MCF 10A (cell line): ENCODE measurements at regions of chr10 and their contacts with region 1.

Region 1: DNA sequence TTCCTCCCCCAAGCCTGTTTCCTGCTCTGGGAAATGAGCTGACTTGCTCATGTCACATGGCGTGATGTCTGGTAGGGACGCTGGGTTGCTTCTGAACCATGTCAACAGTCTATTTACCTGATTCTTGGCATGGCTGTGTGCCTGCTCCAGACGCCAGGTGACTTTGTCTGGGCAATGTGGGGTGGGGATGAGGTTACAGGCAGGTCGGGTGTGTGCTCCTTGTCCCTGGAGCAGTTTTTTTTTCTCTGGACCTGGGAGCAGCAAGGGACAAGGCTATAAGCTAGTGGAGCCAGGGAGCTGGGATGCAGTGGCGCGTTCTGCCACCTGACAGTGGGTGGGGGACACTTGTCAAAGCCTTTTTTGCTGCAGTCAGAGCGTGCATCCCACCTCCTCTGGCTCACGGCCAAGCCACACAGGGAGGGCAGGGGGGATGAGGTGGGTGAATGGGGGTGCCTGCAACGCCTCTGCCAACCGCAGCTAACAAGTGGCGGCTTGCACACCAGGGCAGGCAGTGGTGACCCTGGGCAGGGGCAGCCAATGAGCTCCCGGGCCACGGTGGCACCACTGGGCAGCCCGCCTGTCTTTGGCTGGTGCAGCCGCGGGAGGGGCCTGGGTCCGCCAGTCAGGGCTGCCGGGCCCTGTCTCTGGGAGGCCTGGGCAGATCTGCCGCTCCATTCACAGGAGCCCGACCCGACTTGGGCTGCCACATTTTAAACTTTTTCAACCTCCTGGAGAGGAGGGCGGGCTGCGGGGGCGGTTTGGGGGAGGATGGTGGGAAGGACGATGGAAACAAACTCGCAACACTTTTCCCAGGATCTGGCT is 22.9 kb downstream of the DNAJB12 start:
- DNase-seq: peak; percentile 99
- H3K4me3 Mint-ChIP-seq: peak overlapping the region; percentile 25
- H3K27ac Mint-ChIP-seq: peak overlapping the region; percentile 92
- H3K4me1 Mint-ChIP-seq: peaks cover 61% of the 10 kb centered on the region
- H3K27me3 Mint-ChIP-seq: no peaks in the 10 kb centered on the region
- CTCF ChIP-seq: no peak

Region 2: DNA sequence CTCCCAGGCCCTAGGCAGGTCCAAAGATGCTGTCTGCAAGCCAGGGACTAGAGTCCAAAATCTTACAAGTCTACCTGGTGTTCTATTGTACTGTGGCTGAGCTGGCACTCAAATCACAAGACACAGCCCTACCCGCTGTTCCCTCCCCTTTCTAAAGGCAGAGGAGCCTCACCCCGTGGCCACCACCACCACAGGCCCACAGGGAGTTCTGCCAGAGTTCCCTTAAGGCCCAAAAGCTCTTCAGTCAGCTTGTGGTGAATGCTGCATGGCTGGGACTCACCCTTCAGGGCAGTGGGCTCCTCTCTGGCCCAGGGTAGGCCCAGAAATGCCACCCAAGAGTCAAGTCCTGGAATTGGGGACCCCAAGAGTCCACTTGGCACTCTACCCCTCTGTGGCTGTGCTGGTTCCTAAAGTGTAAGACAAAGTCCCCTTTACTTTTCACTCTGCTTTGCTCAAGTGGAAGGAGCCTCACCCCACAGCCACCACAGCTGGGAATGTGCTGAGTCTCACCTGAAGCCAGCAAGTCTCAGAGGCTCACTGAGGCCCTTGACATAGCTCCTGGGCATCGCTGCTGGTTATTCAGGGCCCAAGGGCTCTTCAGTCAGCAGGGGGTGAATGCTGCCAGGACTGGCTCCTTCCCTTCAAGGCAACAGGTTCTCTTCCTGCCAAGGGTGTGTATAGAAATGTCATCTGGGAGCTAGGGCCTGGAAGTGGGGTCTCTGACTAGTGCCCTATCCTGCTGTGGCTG is 432.0 kb before region 1 on chr10:
- CTCF ChIA-PET with region 1: interaction called, 10 read pairs
- POLR2A ChIA-PET with region 1: no interaction called
- intact Hi-C with region 1: loop called (anchors 5 kb)
- DNase-seq: no peak
- H3K4me3 Mint-ChIP-seq: no peak overlapping the region
- H3K27ac Mint-ChIP-seq: no peak overlapping the region
- H3K4me1 Mint-ChIP-seq: no peaks in the 10 kb centered on the region
- H3K27me3 Mint-ChIP-seq: no peaks in the 10 kb centered on the region
- CTCF ChIP-seq: no peak

Region 3: GRCh38 chr10:72223743-72224101 is 108.1 kb before region 1 on chr10:
- CTCF ChIA-PET with region 1: interaction called, 26 read pairs
- POLR2A ChIA-PET with region 1: interaction called, 20 read pairs
- intact Hi-C with region 1: loop called (anchors 2 kb)
- DNase-seq: no peak
- H3K4me3 Mint-ChIP-seq: no peak overlapping the region
- H3K27ac Mint-ChIP-seq: peak overlapping the region; percentile 23
- H3K4me1 Mint-ChIP-seq: peaks cover 12% of the 10 kb centered on the region
- H3K27me3 Mint-ChIP-seq: no peaks in the 10 kb centered on the region
- CTCF ChIP-seq: no peak

Region 4: GRCh38 chr10:72248468-72249151 is 83.2 kb before region 1 on chr10:
- CTCF ChIA-PET with region 1: interaction called, 36 read pairs
- POLR2A ChIA-PET with region 1: interaction called, 49 read pairs
- intact Hi-C with region 1: loop called (anchors 1 kb)
- DNase-seq: peak; percentile 96
- H3K4me3 Mint-ChIP-seq: peak overlapping the region; percentile 49
- H3K27ac Mint-ChIP-seq: peak overlapping the region; percentile 88
- H3K4me1 Mint-ChIP-seq: peaks cover 59% of the 10 kb centered on the region
- H3K27me3 Mint-ChIP-seq: no peaks in the 10 kb centered on the region
- CTCF ChIP-seq: no peak

Region 5: GRCh38 chr10:72260588-72261322 is 71.1 kb before region 1 on chr10:
- CTCF ChIA-PET with region 1: interaction called, 4 read pairs
- POLR2A ChIA-PET with region 1: interaction called, 39 read pairs
- intact Hi-C with region 1: no loop called
- DNase-seq: peak; percentile 99
- H3K4me3 Mint-ChIP-seq: peak overlapping the region; percentile 53
- H3K27ac Mint-ChIP-seq: peak overlapping the region; percentile 87
- H3K4me1 Mint-ChIP-seq: peaks cover 46% of the 10 kb centered on the region
- H3K27me3 Mint-ChIP-seq: no peaks in the 10 kb centered on the region
- CTCF ChIP-seq: no peak

Region 6: DNA sequence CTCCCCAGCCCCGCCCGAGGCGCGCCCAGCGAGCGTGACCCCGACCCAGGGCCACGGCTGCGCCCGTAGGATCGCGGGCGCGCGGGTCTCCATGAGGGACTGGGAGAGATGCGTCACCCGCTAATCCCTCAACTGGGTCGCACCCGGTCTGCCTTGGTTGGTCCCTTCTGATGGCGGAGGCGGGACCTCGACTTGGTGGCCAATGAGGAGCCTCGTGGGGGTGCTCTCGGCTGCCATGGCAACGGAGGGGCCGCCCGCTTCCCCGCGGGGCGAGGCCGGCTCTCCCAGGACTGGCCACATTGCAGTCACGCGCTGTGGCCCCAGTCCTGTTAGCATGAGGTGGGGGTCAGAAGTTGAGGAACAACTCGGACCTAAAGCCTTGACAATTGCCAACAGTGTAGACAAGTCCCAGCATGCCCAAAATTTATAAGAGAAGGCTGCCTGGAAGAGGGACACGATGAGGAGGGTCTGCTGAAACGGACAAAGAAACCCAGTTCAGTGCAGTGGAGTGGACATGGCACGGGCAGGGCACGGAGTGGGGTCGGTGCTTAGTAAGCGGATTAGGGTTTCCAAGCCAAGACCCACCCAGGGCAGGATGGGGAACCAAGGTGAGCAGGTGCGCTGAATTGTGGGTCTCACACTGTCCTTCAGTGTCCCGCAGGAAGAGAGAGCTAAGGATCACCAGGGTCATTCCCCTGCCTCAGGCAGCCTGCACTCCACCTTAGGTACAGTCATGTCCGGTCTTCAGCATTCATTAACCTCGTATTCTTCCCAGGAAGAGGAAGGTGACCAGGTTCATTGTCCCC is 33.6 kb before region 1 on chr10:
- CTCF ChIA-PET with region 1: interaction called, 4 read pairs
- POLR2A ChIA-PET with region 1: interaction called, 20 read pairs
- intact Hi-C with region 1: no loop called
- DNase-seq: peak; percentile 98
- H3K4me3 Mint-ChIP-seq: peak overlapping the region; percentile 73
- H3K27ac Mint-ChIP-seq: peak overlapping the region; percentile 89
- H3K4me1 Mint-ChIP-seq: peaks cover 13% of the 10 kb centered on the region
- H3K27me3 Mint-ChIP-seq: no peaks in the 10 kb centered on the region
- CTCF ChIP-seq: no peak

Region 7: GRCh38 chr10:72354478-72355213 is 22.8 kb after region 1 on chr10 and contains the start of gene DNAJB12:
- CTCF ChIA-PET with region 1: interaction called, 4 read pairs
- POLR2A ChIA-PET with region 1: interaction called, 14 read pairs
- intact Hi-C with region 1: no loop called
- DNase-seq: peak; percentile 93
- H3K4me3 Mint-ChIP-seq: peak within 1 kb of the TSS; percentile 80
- H3K27ac Mint-ChIP-seq: peak within 1 kb of the TSS; percentile 86
- H3K4me1 Mint-ChIP-seq: peaks cover 34% of the 10 kb centered on the region
- H3K27me3 Mint-ChIP-seq: no peaks in the 10 kb centered on the region
- CTCF ChIP-seq: no peak
- total RNA-seq, gene DNAJB12: 64.7 and 68.1 TPM in 2 replicates